ENCODE measurements at regions of chr1 and their contacts with region 1.

Region 1: GRCh38 chr1:157580179-157580827 is 17.6 kb downstream of the FCRL4 start:
- DNase-seq: peak; percentile 67 to 79 (median 72)
- H3K4me3 ChIP-seq: no peak overlapping the region
- H3K27ac ChIP-seq: no peak overlapping the region
- H3K4me1 ChIP-seq: peaks cover 0 to 11% (median 6%) of the 10 kb centered on the region in 4 experiments
- H3K27me3 ChIP-seq: peaks cover 0 to 21% (median 10%) of the 10 kb centered on the region in 5 experiments

Region 2: GRCh38 chr1:157562515-157562914 is 17.8 kb before region 1 on chr1:
- CTCF ChIA-PET with region 1: interaction called, 15 read pairs
- POLR2A ChIA-PET with region 1: no interaction called
- DNase-seq: no peak
- H3K4me3 ChIP-seq: no peak overlapping the region
- H3K27ac ChIP-seq: no peak overlapping the region
- H3K4me1 ChIP-seq: peaks cover 6 to 35% (median 18%) of the 10 kb centered on the region in 4 experiments
- H3K27me3 ChIP-seq: peaks cover 0 to 5% (median 0%) of the 10 kb centered on the region in 5 experiments

Region 3: GRCh38 chr1:157691285-157691920 is 111.1 kb after region 1 on chr1:
- CTCF ChIA-PET with region 1: interaction called, 50 read pairs
- POLR2A ChIA-PET with region 1: no interaction called
- DNase-seq: peak; percentile 34 to 55 (median 52)
- H3K4me3 ChIP-seq: no peak overlapping the region
- H3K27ac ChIP-seq: no peak overlapping the region
- H3K4me1 ChIP-seq: peaks cover 0 to 3% (median 0%) of the 10 kb centered on the region in 4 experiments
- H3K27me3 ChIP-seq: peaks cover 0 to 8% (median 0%) of the 10 kb centered on the region in 5 experiments

Region 4: GRCh38 chr1:157773493-157774350 is 193.4 kb after region 1 on chr1:
- CTCF ChIA-PET with region 1: interaction called, 10 read pairs
- POLR2A ChIA-PET with region 1: no interaction called
- DNase-seq: peak; percentile 31 to 80 (median 65)
- H3K4me3 ChIP-seq: no peak overlapping the region
- H3K27ac ChIP-seq: no peak overlapping the region
- H3K4me1 ChIP-seq: peaks cover 24 to 75% (median 60%) of the 10 kb centered on the region in 4 experiments
- H3K27me3 ChIP-seq: no peaks in the 10 kb centered on the region

Region 5: DNA sequence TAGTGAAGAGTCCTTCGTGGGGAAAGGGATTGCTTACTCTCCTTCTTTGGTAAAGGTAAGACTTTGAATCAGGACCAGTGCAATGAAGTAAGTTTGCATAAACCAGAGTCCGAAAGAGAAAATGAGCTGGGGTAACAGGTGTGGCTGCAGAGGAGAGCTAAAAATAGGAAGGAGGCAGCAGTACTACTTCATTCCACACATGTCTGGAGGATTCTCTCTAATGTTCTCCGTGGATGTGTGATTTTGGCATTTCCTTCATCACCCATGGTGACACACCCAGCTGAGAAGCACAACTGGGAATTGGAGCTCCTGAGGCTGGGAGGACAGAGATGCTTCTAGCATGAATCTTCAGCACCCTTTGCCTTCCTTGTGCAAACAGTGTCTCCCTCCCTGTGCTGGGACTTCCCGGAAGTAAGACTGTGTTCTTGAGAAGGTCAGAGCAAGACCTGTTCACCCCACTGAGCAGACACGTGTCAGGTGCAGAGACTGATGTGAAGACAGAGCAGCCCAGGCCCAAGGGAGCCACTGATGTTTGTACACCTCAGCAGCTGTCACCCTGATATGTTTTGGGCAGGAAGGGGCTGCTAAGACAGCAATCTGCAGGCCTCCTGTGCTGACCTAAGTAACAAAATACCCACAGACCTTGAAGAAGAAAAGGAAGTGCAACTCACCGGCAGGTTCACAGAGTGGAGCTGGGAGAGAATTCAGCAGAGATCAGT is 226.3 kb after region 1 on chr1:
- CTCF ChIA-PET with region 1: no interaction called
- POLR2A ChIA-PET with region 1: no interaction called
- DNase-seq: peak in 2 of 3 donors; percentile 15 to 39
- H3K4me3 ChIP-seq: no peak overlapping the region
- H3K27ac ChIP-seq: no peak overlapping the region
- H3K4me1 ChIP-seq: no peaks in the 10 kb centered on the region
- H3K27me3 ChIP-seq: no peaks in the 10 kb centered on the region

Region 6: DNA sequence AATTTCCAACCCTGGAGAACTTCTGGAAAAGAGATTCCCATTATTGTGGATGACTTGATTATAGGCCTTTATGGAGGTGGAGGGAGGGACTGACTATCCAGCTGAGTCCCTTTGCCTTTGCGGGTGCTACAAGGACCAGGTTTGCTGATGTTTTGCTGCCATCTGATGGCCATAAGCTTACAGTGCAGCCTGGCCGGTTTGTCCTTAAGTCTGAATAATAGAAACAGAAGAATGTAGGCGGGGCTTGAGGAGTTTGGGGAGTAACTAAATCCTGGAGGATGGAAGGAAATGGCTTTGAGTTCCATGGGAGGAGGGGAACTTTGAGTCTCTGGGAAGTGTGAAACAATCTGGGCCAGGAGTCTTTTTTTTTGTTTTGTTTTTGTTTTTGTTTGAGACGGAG is 544.7 kb after region 1 on chr1:
- CTCF ChIA-PET with region 1: interaction called, 12 read pairs
- POLR2A ChIA-PET with region 1: no interaction called
- DNase-seq: peak; percentile 87 to 93 (median 90)
- H3K4me3 ChIP-seq: no peak overlapping the region
- H3K27ac ChIP-seq: no peak overlapping the region
- H3K4me1 ChIP-seq: peaks cover 0 to 6% (median 4%) of the 10 kb centered on the region in 4 experiments
- H3K27me3 ChIP-seq: peaks cover 0 to 11% (median 4%) of the 10 kb centered on the region in 5 experiments